ENCODE measurements at regions of chr12 and their contacts with region 1.

Region 1: GRCh38 chr12:56127888-56128669 is at the start of gene ESYT1:
- DNase-seq: peak; percentile 99
- H3K4me3 Mint-ChIP-seq: peak within 1 kb of the TSS; percentile 97
- H3K27ac Mint-ChIP-seq: peak within 1 kb of the TSS; percentile 94
- H3K4me1 Mint-ChIP-seq: peaks cover 75% of the 10 kb centered on the region
- H3K27me3 Mint-ChIP-seq: no peaks in the 10 kb centered on the region
- total RNA-seq, gene ESYT1: 266 to 279 TPM

Region 2: GRCh38 chr12:56143870-56144269 is 15.8 kb after region 1 on chr12:
- CTCF ChIA-PET with region 1: interaction called, 11 read pairs
- POLR2A ChIA-PET with region 1: interaction called, 41 read pairs
- DNase-seq: no peak
- H3K4me3 Mint-ChIP-seq: no peak overlapping the region
- H3K27ac Mint-ChIP-seq: peak overlapping the region; percentile 70
- H3K4me1 Mint-ChIP-seq: peaks cover 47% of the 10 kb centered on the region
- H3K27me3 Mint-ChIP-seq: no peaks in the 10 kb centered on the region

Region 3: DNA sequence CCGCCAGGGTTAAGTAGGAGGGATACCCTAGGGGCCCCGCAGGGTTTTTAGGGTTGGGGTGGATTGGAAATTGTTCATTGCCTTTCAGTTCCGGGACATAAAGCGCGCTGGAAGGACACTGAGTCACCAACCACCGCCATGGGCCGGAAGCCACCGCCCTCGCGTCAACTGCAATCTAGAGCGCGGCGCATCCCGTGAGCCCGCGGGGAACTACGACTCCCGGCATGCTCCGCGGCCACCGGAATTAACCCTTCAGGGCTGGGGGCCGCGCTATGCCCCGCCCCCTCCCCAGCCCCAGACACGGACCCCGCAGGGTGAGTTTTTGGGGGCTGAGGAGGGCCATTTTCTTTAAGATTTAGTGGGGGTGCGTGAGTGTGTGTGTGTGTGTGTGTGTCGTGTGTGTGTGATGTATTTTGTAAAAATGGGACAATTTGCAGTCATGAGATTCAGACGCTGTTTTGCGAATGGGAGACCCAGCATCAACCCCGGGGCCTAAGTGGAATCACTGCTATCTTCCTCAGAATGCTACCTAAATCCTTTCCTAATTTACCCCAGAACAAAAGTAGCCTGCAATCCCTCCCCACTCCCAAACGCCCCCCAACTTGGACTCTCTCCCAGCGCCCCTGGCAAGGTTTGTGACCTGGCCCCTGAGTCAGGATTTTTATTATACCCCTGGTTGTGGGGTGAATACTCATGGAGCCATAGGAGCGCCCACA is 24.4 kb after region 1 on chr12 and contains the start of gene MYL6B:
- CTCF ChIA-PET with region 1: interaction called, 18 read pairs
- POLR2A ChIA-PET with region 1: interaction called, 53 read pairs
- DNase-seq: peak; percentile 97
- H3K4me3 Mint-ChIP-seq: peak within 1 kb of the TSS; percentile 94
- H3K27ac Mint-ChIP-seq: peak within 1 kb of the TSS; percentile 100
- H3K4me1 Mint-ChIP-seq: peaks cover 54% of the 10 kb centered on the region
- H3K27me3 Mint-ChIP-seq: no peaks in the 10 kb centered on the region
- total RNA-seq, gene MYL6B: 60.4 to 63.2 TPM

Region 4: GRCh38 chr12:56258057-56258819 is 130.2 kb after region 1 on chr12 and contains the start of gene ANKRD52:
- CTCF ChIA-PET with region 1: interaction called, 11 read pairs
- POLR2A ChIA-PET with region 1: interaction called, 9 read pairs
- DNase-seq: peak; percentile 80
- H3K4me3 Mint-ChIP-seq: peak within 1 kb of the TSS; percentile 91
- H3K27ac Mint-ChIP-seq: peak within 1 kb of the TSS; percentile 76
- H3K4me1 Mint-ChIP-seq: peaks cover 22% of the 10 kb centered on the region
- H3K27me3 Mint-ChIP-seq: no peaks in the 10 kb centered on the region
- total RNA-seq, gene ANKRD52: 46.4 to 50.1 TPM